ENCODE measurements at regions of chr4 and their contacts with region 1.

Region 1: GRCh38 chr4:26613237-26613636 is 29.4 kb downstream of the TBC1D19 start:
- DNase-seq: no peak
- H3K4me3 ChIP-seq: no peak overlapping the region
- H3K27ac ChIP-seq: peak overlapping the region in 1 of 2 donors; percentile 30
- H3K4me1 ChIP-seq: peaks cover 1% of the 10 kb centered on the region
- H3K27me3 ChIP-seq: no peaks in the 10 kb centered on the region
- CTCF ChIP-seq: no peak
- EP300 ChIP-seq: no peak
- POLR2A ChIP-seq: no peak

Region 2: GRCh38 chr4:28562913-28563312 is 1949.7 kb after region 1 on chr4:
- intact Hi-C with region 1: loop called in 1 of 4 experiments (anchors 5 kb)
- DNase-seq: no peak
- H3K4me3 ChIP-seq: no peak overlapping the region
- H3K27ac ChIP-seq: no peak overlapping the region
- H3K4me1 ChIP-seq: no peaks in the 10 kb centered on the region
- H3K27me3 ChIP-seq: no peaks in the 10 kb centered on the region
- CTCF ChIP-seq: no peak
- EP300 ChIP-seq: no peak
- POLR2A ChIP-seq: no peak